ENCODE measurements at regions of chr6 and their contacts with region 1.

Region 1: GRCh38 chr6:52284460-52285176 is at the start of gene MCM3:
- DNase-seq: peak; percentile 99
- H3K4me3 Mint-ChIP-seq: no peak within 1 kb of the TSS
- H3K27ac Mint-ChIP-seq: peak within 1 kb of the TSS; percentile 3
- H3K4me1 Mint-ChIP-seq: peaks cover 54% of the 10 kb centered on the region
- H3K27me3 Mint-ChIP-seq: no peaks in the 10 kb centered on the region
- total RNA-seq, gene MCM3: 149 TPM

Region 2: GRCh38 chr6:52263709-52264540 is 20.7 kb before region 1 on chr6:
- CTCF ChIA-PET with region 1: interaction called, 16 read pairs
- POLR2A ChIA-PET with region 1: interaction called, 6 read pairs
- DNase-seq: peak; percentile 77
- H3K4me3 Mint-ChIP-seq: no peak overlapping the region
- H3K27ac Mint-ChIP-seq: peak overlapping the region; percentile 47
- H3K4me1 Mint-ChIP-seq: peaks cover 8% of the 10 kb centered on the region
- H3K27me3 Mint-ChIP-seq: no peaks in the 10 kb centered on the region

Region 3: DNA sequence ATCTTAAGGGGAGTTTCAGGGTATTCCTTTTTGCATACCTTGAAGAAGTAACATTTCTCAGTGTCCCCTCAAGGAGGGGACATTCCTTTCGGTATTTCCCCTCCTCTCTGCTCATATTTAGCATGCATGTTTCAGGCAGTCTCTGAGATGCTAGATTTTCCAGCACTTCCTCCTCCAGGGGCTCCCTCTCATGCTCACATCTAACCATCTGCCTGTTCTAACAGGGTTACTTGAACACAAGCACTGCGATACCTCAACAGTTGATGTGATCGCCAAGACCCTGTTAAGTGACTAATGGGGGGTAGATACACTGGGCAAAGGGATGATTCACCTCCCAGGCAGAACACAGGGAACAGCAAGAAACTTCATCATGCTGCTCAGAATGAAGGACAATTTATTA is 12.8 kb after region 1 on chr6:
- CTCF ChIA-PET with region 1: interaction called, 21 read pairs
- POLR2A ChIA-PET with region 1: interaction called, 11 read pairs
- DNase-seq: no peak
- H3K4me3 Mint-ChIP-seq: no peak overlapping the region
- H3K27ac Mint-ChIP-seq: no peak overlapping the region
- H3K4me1 Mint-ChIP-seq: peaks cover 25% of the 10 kb centered on the region
- H3K27me3 Mint-ChIP-seq: no peaks in the 10 kb centered on the region

Region 4: GRCh38 chr6:52361945-52362442 is 77.4 kb after region 1 on chr6 and contains the start of gene PAQR8:
- CTCF ChIA-PET with region 1: interaction called, 63 read pairs
- POLR2A ChIA-PET with region 1: interaction called, 64 read pairs
- DNase-seq: peak; percentile 83
- H3K4me3 Mint-ChIP-seq: peak within 1 kb of the TSS; percentile 93
- H3K27ac Mint-ChIP-seq: peak within 1 kb of the TSS; percentile 72
- H3K4me1 Mint-ChIP-seq: peaks cover 29% of the 10 kb centered on the region
- H3K27me3 Mint-ChIP-seq: no peaks in the 10 kb centered on the region
- total RNA-seq, gene PAQR8: 12.8 to 14.1 TPM

Region 5: DNA sequence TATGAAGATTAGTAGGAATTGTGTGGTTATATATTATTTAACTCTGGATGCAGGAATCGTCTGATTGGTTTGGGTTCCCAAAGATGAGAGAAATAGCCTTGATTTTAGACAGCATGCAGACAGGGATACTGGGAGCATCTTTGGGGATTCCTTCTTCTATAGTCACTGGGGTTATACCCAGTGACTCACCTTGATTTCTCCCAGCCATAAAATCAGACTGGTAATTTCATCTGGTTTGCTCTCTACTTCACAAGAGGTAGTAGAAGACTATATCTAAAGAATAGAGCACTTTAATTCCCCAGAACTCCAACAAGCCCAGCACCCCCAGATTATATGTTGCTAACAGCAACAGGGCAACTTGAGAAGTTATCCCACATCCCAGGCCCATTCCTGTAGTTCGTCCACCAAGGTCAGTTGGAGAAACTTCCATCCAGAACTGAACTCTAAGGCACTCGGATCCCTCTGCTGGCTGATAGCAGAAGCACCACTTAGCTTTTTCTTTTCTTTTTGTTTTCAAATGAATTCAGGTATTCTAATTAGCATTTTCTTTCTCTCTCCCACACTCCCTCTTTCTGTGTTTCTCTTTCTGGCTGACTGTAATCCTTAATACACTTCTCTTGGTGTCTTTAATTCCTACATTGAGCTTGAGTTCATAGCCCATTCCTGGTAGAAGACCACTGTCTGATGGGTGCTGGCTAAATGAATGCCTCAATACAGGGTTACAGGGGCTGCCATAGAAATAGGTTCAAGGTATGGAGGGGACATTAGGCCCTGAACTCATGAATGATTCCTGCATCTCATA is 115.1 kb after region 1 on chr6:
- CTCF ChIA-PET with region 1: interaction called, 159 read pairs
- POLR2A ChIA-PET with region 1: interaction called, 54 read pairs
- DNase-seq: no peak
- H3K4me3 Mint-ChIP-seq: no peak overlapping the region
- H3K27ac Mint-ChIP-seq: no peak overlapping the region
- H3K4me1 Mint-ChIP-seq: peaks cover 53% of the 10 kb centered on the region
- H3K27me3 Mint-ChIP-seq: peaks cover 4% of the 10 kb centered on the region

Region 6: GRCh38 chr6:52419809-52420670 is 135.4 kb after region 1 on chr6 and contains the start of gene EFHC1:
- CTCF ChIA-PET with region 1: interaction called, 33 read pairs
- POLR2A ChIA-PET with region 1: interaction called, 29 read pairs
- DNase-seq: peak; percentile 98
- H3K4me3 Mint-ChIP-seq: no peak within 1 kb of the TSS
- H3K27ac Mint-ChIP-seq: peak within 1 kb of the TSS; percentile 33
- H3K4me1 Mint-ChIP-seq: peaks cover 20% of the 10 kb centered on the region
- H3K27me3 Mint-ChIP-seq: peaks cover 6% of the 10 kb centered on the region
- total RNA-seq, gene EFHC1: 1.6 to 3.4 TPM

Region 7: DNA sequence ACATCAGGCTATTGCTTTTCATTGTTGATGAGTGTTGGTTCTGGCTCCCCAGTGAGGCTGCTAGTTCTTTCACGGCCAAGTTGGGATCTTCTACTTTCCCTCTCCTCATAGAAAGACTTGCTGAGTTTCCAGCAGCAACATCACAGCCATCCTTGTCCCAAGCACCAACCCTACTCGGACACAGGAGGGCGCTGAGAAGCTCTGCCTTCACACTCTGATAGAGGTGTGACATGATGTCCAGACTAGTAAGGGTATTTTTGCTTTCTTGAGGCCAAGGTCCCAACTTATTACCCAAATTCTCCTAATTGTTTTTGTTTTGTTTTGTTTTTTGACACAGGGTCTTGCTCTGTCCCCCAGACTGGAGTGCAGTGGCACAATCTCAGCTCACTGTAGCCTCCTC is 867.1 kb after region 1 on chr6:
- CTCF ChIA-PET with region 1: no interaction called
- POLR2A ChIA-PET with region 1: no interaction called
- DNase-seq: no peak
- H3K4me3 Mint-ChIP-seq: no peak overlapping the region
- H3K27ac Mint-ChIP-seq: no peak overlapping the region
- H3K4me1 Mint-ChIP-seq: no peaks in the 10 kb centered on the region
- H3K27me3 Mint-ChIP-seq: peaks cover 10% of the 10 kb centered on the region